Breast epithelium (tissue), 4 donors: ENCODE measurements at regions of chr2 and their contacts with region 1.

Region 1: GRCh38 chr2:80299661-80300060 is 4.9 kb downstream of the LRRTM1 start:
- DNase-seq: no peak
- H3K4me3 ChIP-seq: no peak overlapping the region
- H3K27ac ChIP-seq: no peak overlapping the region
- H3K4me1 ChIP-seq: no peaks in the 10 kb centered on the region
- H3K27me3 ChIP-seq: peaks cover 0 to 33% of the 10 kb centered on the region in 2 donors
- CTCF ChIP-seq: no peak
- POLR2A ChIP-seq: no peak

Region 2: DNA sequence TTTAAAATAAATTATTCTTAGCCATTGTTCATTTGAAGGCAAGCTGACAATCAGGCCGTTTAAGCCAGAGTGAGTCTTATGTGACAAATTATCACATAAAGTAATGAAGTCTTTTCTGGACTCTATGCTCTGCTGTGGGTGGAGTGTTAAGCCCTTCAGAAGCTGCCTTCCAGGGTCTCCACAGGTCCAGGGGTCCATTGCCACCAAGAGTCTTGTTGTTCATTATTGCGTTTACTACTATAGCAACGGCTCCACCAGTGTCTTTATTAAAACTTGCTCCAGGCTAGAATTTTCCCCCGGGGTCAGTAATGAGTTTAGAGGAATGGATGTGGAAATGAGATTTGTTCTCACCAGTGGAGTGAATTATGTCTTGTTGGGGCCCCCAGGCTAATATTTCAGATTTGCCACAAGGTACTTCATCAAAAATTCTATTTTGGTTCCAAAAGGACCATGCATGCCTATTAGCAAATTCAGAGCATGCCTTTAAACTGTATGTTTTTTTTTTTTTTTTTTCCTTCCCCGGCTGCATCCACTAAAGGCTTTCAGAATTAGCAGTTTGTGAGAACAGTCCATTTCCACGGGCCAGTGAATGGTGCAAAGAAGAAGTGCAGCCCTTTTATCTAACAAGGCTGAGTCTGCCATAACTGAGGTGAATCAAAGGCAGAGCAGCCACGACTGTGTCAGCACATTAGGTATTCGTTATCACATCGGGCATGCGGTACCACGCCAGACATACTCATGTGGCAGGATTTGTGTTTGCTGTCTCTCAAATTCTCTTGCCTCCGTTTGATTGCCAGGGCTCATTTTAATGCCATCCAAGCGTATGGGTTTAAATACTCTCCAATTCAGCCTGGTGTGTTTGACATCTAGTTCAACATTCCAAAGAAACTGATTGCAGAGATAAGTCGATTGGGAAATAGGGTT is 31.1 kb after region 1 on chr2:
- intact Hi-C with region 1: loop called (anchors 1 kb)
- DNase-seq: no peak
- H3K4me3 ChIP-seq: no peak overlapping the region
- H3K27ac ChIP-seq: no peak overlapping the region
- H3K4me1 ChIP-seq: no peaks in the 10 kb centered on the region
- H3K27me3 ChIP-seq: no peaks in the 10 kb centered on the region
- CTCF ChIP-seq: no peak
- POLR2A ChIP-seq: no peak

Region 3: GRCh38 chr2:80351231-80351630 is 51.6 kb after region 1 on chr2:
- intact Hi-C with region 1: no loop called
- DNase-seq: no peak
- H3K4me3 ChIP-seq: no peak overlapping the region
- H3K27ac ChIP-seq: no peak overlapping the region
- H3K4me1 ChIP-seq: no peaks in the 10 kb centered on the region
- H3K27me3 ChIP-seq: no peaks in the 10 kb centered on the region
- CTCF ChIP-seq: no peak
- POLR2A ChIP-seq: no peak